ENCODE measurements at regions of chr17 and their contacts with region 1.

Region 1: GRCh38 chr17:28416703-28417311 is 10.8 kb upstream of the SLC46A1 start:
- DNase-seq: peak; percentile 61
- H3K4me3 ChIP-seq: no peak overlapping the region
- H3K27ac ChIP-seq: no peak overlapping the region
- H3K4me1 ChIP-seq: no peaks in the 10 kb centered on the region
- H3K27me3 ChIP-seq: peaks cover 9 to 19% of the 10 kb centered on the region in 2 experiments
- CTCF ChIP-seq: peak; percentile 76 to 85
- POLR2A ChIP-seq: no peak

Region 2: DNA sequence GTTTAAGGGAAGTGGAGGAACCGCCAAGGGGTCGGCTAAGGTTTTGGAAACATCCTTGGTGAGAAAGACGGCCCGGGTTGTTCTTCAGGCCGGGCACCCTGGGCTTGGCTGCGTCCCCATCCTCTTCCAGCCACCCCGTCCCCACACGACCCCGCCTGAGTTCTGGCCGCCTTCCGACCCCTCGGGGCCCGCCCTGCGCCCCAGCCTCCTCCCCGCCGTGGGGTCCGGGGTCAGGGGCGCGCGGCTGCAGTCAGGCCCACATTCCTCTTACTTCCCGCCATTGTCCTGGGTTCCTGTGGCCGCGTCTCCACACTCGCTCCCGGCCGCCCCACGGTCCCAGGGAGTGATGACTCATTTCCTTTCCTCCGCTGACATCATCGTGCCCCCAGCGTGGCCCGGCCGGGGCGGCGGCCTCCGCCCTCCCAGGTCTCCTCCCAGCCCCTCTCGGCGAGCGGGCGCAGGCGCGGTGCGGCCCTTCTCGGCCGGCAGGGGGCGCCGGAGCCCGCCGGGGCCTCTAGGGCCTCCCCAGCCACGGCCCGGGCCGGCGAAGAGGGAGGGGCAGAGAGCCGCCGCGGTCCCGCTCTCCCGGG is 1063.3 kb before region 1 on chr17:
- CTCF ChIA-PET with region 1: no interaction called
- POLR2A ChIA-PET with region 1: no interaction called
- dilution Hi-C with region 1: no loop called
- intact Hi-C with region 1: no loop called
- DNase-seq: peak; percentile 97
- H3K4me3 ChIP-seq: peak overlapping the region in 1 of 3 experiments; percentile 20
- H3K27ac ChIP-seq: peak overlapping the region; percentile 99
- H3K4me1 ChIP-seq: peaks cover 40% of the 10 kb centered on the region
- H3K27me3 ChIP-seq: no peaks in the 10 kb centered on the region
- CTCF ChIP-seq: peak; percentile 61 to 99
- POLR2A ChIP-seq: peak; percentile 47

Region 3: DNA sequence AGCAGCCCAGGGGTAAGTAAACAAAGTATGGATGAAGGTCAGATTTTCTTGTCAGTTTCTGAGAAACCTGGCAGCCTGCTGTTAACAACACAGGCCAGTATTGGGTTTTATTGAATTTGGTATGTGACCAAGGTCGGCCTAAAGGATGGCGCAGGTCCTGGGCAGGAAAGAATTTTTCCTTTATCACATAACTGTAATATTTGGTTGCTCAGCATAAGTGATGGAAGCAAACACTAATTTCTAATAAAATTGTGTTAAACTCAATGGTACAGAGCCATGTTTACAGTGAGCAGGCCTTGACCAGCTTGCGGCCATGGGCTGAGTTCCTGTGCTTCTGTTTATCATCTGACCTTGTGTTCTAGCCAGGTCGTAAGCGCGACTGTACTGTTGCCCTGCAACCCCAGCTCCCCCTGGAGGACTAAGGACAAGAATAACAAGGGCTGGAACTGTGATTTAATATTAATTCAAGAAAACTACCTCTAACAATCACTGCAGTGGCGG is 70.0 kb before region 1 on chr17:
- CTCF ChIA-PET with region 1: interaction called, 16 read pairs
- POLR2A ChIA-PET with region 1: no interaction called
- dilution Hi-C with region 1: no loop called
- intact Hi-C with region 1: loop called (anchors 2 kb)
- DNase-seq: peak; percentile 90
- H3K4me3 ChIP-seq: no peak overlapping the region
- H3K27ac ChIP-seq: peak overlapping the region; percentile 88
- H3K4me1 ChIP-seq: peaks cover 32% of the 10 kb centered on the region
- H3K27me3 ChIP-seq: no peaks in the 10 kb centered on the region
- CTCF ChIP-seq: peak; percentile 59 to 61
- POLR2A ChIP-seq: no peak

Region 4: DNA sequence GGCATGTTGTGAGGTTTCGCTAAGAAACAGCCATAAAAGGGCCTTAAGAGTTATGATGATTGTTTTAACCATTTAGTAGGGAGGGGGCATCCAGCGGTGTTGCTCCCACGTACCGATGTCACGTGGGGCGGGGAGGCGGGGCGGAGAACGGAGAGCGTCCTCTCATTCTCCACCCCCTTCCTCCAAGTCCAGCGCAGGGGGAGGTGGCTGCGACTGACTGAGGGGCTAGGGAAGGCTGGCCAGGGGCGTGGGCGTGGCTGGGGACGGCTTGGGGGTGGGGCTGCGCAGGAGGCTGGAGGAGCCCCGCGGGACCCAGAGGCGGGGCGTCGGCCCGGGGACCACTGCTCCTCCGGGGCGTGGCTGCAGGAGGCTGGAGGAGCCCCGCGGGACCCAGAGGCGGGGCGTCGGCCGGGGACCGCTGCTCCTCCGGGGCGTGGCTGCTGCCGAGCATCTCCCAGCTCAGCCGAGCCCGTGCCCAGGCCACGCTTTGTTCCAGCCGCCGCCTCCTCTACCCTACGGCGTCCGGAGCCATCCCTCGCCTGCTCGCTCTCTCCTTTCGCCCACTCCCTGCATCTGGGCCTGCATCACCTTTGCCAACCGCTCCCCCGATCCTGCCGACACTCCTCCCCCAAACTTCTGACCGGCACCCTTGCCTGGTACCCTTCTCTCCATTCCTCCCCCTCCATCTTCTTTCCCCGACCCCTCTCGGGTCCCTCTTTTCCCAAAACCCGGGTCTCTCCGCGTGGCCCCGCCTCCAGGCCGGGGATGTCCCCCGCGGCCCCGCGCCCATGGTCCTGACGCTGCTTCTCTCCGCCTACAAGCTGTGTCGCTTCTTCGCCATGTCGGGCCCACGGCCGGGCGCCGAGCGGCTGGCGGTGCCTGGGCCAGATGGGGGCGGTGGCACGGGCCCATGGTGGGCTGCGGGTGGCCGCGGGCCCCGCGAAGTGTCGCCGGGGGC is 45.3 kb before region 1 on chr17 and contains the start of gene SARM1:
- CTCF ChIA-PET with region 1: interaction called, 36 read pairs
- POLR2A ChIA-PET with region 1: no interaction called
- dilution Hi-C with region 1: no loop called
- intact Hi-C with region 1: no loop called
- DNase-seq: peak; percentile 88
- H3K4me3 ChIP-seq: peak within 1 kb of the TSS; percentile 35 to 52 (median 45)
- H3K27ac ChIP-seq: no peak within 1 kb of the TSS
- H3K4me1 ChIP-seq: peaks cover 13% of the 10 kb centered on the region
- H3K27me3 ChIP-seq: no peaks in the 10 kb centered on the region
- CTCF ChIP-seq: no peak
- POLR2A ChIP-seq: no peak
- total RNA-seq, gene SARM1: 4.6 and 7.0 TPM in 2 replicates

Region 5: DNA sequence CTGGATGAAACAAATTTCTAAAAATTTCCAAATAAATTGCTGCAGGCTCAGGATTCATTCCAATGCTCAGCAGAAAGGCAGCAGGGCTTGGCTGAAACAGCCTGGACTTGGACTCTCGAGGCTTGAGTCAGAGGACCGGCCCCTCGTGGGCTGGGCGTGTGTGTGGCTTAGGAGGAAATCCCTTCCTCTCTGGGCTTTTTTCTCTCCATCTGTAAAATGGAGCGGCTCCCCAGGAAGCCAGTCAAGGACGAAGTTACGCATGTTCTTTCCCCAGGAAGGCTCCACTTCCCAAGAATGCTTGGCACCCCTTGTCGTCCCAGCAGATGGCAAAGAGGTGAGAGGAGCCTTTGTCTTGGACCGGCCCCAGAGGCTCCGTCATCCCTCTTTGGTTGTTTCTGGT is 24.3 kb before region 1 on chr17:
- CTCF ChIA-PET with region 1: interaction called, 11 read pairs
- POLR2A ChIA-PET with region 1: no interaction called
- dilution Hi-C with region 1: no loop called
- intact Hi-C with region 1: no loop called
- DNase-seq: peak; percentile 20
- H3K4me3 ChIP-seq: no peak overlapping the region
- H3K27ac ChIP-seq: no peak overlapping the region
- H3K4me1 ChIP-seq: peaks cover 4% of the 10 kb centered on the region
- H3K27me3 ChIP-seq: no peaks in the 10 kb centered on the region
- CTCF ChIP-seq: no peak
- POLR2A ChIP-seq: no peak

Region 6: DNA sequence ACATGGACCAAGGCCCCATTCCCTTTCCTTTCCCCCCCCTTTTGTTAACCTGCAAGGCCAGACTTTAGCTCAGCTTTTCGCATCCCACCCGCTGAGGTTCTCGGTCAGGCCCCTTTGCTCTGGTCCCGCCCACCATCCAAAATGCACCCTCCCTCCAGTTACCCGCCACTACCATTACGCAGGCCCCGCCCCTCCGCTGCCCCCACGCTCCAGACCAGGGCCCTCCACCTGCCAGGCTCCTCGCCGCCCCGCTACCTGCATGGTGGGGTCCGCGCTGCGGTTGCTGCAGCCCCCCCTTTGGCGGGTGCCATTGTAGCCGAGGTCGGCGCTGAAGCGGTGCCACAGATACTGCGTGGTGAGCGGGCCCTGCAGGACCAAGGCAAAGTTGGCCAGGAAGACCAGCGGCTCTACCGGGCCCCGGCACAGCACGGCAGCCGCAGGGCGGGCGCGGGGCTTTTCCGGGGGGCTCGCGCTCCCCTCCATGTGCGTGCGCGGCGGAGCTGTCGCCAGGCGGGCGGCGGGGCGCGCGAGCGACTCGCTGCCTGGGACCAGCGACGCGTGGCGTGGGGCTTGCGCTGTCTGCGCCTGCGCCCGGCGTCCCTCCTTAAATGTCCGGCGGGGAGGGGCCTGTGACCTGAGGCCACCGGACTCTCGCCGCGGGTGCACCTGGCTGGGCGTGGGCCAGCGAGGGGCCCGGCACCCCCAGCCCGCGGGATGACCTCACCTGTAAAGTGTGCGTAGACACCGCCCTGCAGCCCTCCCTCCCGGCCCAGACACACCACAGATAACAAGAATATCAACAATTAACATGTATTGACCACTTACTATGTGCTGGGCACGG is 11.0 kb before region 1 on chr17 and contains the start of gene SLC46A1:
- CTCF ChIA-PET with region 1: interaction called, 34 read pairs
- POLR2A ChIA-PET with region 1: no interaction called
- dilution Hi-C with region 1: no loop called
- intact Hi-C with region 1: no loop called
- DNase-seq: peak; percentile 24
- H3K4me3 ChIP-seq: peak within 1 kb of the TSS; percentile 0 to 54 (median 7)
- H3K27ac ChIP-seq: no peak within 1 kb of the TSS
- H3K4me1 ChIP-seq: peaks cover 9% of the 10 kb centered on the region
- H3K27me3 ChIP-seq: peaks cover under 1 to 2% of the 10 kb centered on the region in 2 experiments
- CTCF ChIP-seq: no peak
- POLR2A ChIP-seq: no peak
- total RNA-seq, gene SLC46A1: 1.8 and 4.1 TPM in 2 replicates